OCI-LY7 (cell line): ENCODE measurements at regions of chr18 and their contacts with region 1.

Region 1: GRCh38 chr18:22946846-22947245 is 13.7 kb downstream of the RBBP8 start:
- DNase-seq: no peak
- H3K4me3 ChIP-seq: no peak overlapping the region
- H3K27ac ChIP-seq: no peak overlapping the region
- H3K4me1 ChIP-seq: peaks cover 6% of the 10 kb centered on the region
- CTCF ChIP-seq: no peak

Region 2: GRCh38 chr18:22865354-22866116 is 81.3 kb before region 1 on chr18:
- CTCF ChIA-PET with region 1: no interaction called
- POLR2A ChIA-PET with region 1: no interaction called
- intact Hi-C with region 1: no loop called
- DNase-seq: no peak
- H3K4me3 ChIP-seq: no peak overlapping the region
- H3K27ac ChIP-seq: no peak overlapping the region
- H3K4me1 ChIP-seq: no peaks in the 10 kb centered on the region
- CTCF ChIP-seq: no peak

Region 3: GRCh38 chr18:22964116-22964515 is 17.3 kb after region 1 on chr18:
- CTCF ChIA-PET with region 1: no interaction called
- POLR2A ChIA-PET with region 1: interaction called, 4 read pairs
- intact Hi-C with region 1: loop called (anchors 1 kb)
- DNase-seq: no peak
- H3K4me3 ChIP-seq: no peak overlapping the region
- H3K27ac ChIP-seq: no peak overlapping the region
- H3K4me1 ChIP-seq: no peaks in the 10 kb centered on the region
- CTCF ChIP-seq: no peak

Region 4: GRCh38 chr18:23437357-23438045 is 490.7 kb after region 1 on chr18:
- CTCF ChIA-PET with region 1: no interaction called
- POLR2A ChIA-PET with region 1: no interaction called
- intact Hi-C with region 1: no loop called
- DNase-seq: peak; percentile 86
- H3K4me3 ChIP-seq: peak overlapping the region; percentile 95
- H3K27ac ChIP-seq: no peak overlapping the region
- H3K4me1 ChIP-seq: peaks cover 11% of the 10 kb centered on the region
- CTCF ChIP-seq: no peak